Aorta (tissue), 5 donors: ENCODE measurements at regions of chr18 and their contacts with region 1.

Region 1: DNA sequence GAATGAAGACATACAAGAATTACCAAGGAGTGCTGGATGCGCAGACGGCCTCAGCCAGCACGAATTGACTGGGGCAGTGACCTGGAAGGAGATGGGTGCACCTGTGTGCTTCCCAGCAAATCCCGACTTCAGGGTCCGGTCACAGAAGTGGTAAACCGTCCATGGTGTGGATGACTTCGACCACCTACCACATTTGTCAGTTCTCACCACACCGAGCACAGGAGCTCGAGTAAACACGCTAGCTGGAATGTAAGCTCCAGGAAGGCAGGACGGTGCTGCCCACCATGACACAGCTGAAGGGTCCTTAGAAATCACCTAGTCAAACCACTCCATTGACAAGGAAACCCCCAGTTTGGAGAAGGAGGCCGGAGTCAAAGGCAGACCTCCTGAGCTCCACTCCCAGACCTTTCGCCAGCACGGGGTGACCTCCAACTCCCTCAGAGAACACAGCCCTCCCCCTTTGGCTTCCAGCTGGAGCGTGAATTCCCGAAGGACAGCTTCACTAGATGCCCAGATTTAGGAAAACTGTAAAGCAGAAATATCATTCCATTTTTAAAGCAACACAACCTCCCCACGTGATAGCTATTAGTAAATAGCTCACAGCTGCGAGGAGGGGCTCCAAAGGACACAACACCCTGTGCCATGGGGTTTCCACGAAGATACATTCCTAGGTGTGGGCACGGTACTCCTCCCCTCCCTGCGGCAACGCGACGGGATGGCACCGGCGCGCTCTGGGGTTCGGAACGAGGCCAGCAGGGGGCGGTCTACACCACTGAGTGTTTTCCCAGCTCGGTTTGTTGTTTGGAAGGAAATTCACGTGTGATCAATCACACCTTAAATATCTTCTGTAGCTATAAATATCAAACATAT is 34.1 kb upstream of the GNAL start:
- DNase-seq: peak in 1 of 2 donors; percentile 90
- ATAC-seq: peak; percentile 74
- H3K4me3 ChIP-seq: peak overlapping the region in 1 of 2 donors; percentile 10
- H3K27ac ChIP-seq: no peak overlapping the region
- H3K4me1 ChIP-seq: no peaks in the 10 kb centered on the region
- H3K27me3 ChIP-seq: no peaks in the 10 kb centered on the region

Region 2: GRCh38 chr18:11607906-11608305 is 47.1 kb before region 1 on chr18:
- intact Hi-C with region 1: no loop called
- DNase-seq: no peak
- ATAC-seq: no peak
- H3K4me3 ChIP-seq: no peak overlapping the region
- H3K27ac ChIP-seq: no peak overlapping the region
- H3K4me1 ChIP-seq: no peaks in the 10 kb centered on the region
- H3K27me3 ChIP-seq: no peaks in the 10 kb centered on the region

Region 3: GRCh38 chr18:11851146-11851805 is 196.3 kb after region 1 on chr18 and contains the start of gene CHMP1B:
- intact Hi-C with region 1: loop called in 1 of 2 experiments (anchors 10 kb)
- DNase-seq: peak; percentile 99 to 100
- ATAC-seq: peak; percentile 99
- H3K4me3 ChIP-seq: peak within 1 kb of the TSS; percentile 94 to 100
- H3K27ac ChIP-seq: peak within 1 kb of the TSS; percentile 95 to 99
- H3K4me1 ChIP-seq: peaks cover 0 to 2% of the 10 kb centered on the region in 2 donors
- H3K27me3 ChIP-seq: no peaks in the 10 kb centered on the region
- total RNA-seq, gene CHMP1B: 33.0 to 42.8 TPM

Region 4: DNA sequence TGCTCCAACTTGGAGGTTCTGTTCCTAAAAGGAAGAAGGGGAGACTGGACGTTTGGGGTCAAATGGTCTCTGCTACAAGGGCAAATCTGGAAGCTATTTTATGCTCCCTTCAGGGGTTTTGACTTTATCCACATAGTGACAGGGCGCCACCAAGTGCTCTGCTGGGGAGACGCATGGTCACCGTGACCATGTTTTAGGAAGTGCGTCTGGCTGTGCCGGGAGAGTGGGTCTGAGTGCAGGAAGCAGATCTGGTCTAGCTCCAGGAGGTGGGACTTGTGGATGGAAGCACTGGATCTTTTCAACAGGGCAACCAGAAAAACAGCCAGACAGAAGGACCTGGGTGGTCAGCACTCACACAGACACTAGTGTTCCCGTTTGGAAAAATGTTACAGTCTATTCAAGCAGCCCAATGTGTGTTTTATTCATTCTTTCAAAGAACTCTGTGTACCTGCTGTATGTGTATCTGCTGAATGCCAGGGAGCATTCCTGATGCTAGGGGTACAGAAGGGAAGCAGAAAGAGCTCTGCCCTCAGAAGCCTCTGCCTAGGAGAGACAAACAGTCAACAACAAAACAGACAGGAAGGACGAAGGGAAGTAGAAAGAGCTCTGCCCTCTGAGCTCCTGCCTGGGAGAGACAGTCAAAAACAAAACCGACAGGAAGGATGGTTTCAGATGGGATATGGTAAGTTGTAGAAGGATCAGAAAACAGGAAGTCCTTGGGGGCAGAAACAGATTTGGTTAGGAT is 340.6 kb after region 1 on chr18:
- intact Hi-C with region 1: loop called in 1 of 2 experiments (anchors 10 kb)
- DNase-seq: peak; percentile 88
- ATAC-seq: peak; percentile 89
- H3K4me3 ChIP-seq: no peak overlapping the region
- H3K27ac ChIP-seq: no peak overlapping the region
- H3K4me1 ChIP-seq: no peaks in the 10 kb centered on the region
- H3K27me3 ChIP-seq: no peaks in the 10 kb centered on the region

Region 5: DNA sequence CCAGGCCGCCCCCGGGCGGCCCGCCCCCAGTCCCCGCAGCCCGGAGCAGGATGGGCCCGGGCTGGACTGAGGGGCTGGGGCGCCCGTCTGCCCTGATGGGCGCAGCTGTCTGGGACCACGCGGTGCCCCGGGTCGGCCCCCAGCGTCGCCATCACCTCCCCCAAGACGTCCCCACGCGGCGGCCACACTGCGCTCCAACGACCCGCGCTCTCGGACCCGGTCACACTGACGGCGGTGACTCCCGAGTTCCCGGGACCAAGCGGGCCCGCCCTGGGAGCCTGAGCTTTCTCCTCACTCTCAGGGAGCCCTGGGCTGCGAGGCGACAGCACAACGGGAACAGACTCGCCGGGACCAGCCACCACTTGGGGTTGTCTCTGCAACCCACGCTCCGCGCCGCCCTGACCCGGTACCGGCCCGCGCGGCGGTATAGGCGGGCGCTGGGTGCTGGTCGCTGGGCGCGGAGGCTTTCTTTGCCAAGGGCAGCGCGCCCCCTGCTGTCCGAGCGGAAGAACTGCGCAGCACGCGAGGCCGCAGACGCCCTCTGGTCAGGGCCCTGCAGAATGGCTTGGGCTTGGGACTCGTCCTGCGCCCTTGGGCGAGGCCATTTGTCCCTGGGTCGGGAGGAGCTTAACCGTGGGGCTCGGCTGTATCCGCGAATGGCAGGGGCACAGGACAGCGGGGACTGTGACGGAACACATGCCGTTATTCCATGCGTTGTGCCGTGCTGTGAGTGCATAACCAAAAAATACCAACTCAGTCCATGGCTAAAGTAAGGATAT is 383.9 kb after region 1 on chr18:
- intact Hi-C with region 1: loop called in 1 of 2 experiments (anchors 10 kb)
- DNase-seq: peak; percentile 87 to 94
- ATAC-seq: peak; percentile 98
- H3K4me3 ChIP-seq: peak overlapping the region; percentile 2 to 58
- H3K27ac ChIP-seq: no peak overlapping the region
- H3K4me1 ChIP-seq: no peaks in the 10 kb centered on the region
- H3K27me3 ChIP-seq: no peaks in the 10 kb centered on the region